Panc1 (cell line): ENCODE measurements at regions of chr1 and their contacts with region 1.

Region 1: DNA sequence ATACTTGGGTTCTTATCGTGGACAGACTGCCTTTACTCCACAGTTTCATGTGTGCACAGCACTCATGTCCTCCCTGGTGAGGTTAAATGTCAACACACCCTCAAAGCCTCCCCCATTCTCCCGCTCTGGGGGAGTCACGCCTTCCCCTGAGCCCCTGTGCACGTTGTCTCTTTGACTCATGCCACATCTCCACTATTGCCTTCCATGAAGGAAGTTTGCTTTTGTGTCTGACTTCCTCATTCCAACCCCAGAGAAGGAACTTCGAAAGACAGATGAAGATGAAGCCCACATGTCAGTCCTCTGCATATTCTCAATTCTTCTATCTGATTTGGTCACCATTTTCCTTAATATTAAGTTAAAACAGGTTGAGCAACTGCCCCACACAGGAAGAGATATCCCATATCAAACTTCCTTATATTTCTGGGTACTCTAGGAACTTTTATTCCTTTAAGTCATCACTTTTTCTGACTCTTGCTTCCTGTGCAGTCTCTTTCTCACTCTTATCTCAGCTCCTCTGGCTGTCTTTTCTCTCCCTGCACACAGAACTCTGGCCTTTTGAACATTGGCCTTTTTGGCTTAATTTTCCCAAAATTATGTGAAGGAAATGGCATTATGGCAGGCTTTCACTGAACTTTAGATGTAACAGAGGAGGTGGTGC is 41.5 kb downstream of the C4BPA start:
- DNase-seq: no peak
- ATAC-seq: no peak
- H3K4me3 ChIP-seq: no peak overlapping the region
- H3K27ac ChIP-seq: no peak overlapping the region
- H3K4me1 ChIP-seq: no peaks in the 10 kb centered on the region
- H3K27me3 ChIP-seq: no peaks in the 10 kb centered on the region
- CTCF ChIP-seq: no peak

Region 2: GRCh38 chr1:206967096-206967849 is 178.3 kb before region 1 on chr1:
- CTCF ChIA-PET with region 1: no interaction called
- POLR2A ChIA-PET with region 1: no interaction called
- in situ Hi-C with region 1: no loop called
- intact Hi-C with region 1: no loop called
- DNase-seq: no peak
- ATAC-seq: no peak
- H3K4me3 ChIP-seq: no peak overlapping the region
- H3K27ac ChIP-seq: no peak overlapping the region
- H3K4me1 ChIP-seq: no peaks in the 10 kb centered on the region
- H3K27me3 ChIP-seq: peaks cover 13% of the 10 kb centered on the region
- CTCF ChIP-seq: no peak

Region 3: DNA sequence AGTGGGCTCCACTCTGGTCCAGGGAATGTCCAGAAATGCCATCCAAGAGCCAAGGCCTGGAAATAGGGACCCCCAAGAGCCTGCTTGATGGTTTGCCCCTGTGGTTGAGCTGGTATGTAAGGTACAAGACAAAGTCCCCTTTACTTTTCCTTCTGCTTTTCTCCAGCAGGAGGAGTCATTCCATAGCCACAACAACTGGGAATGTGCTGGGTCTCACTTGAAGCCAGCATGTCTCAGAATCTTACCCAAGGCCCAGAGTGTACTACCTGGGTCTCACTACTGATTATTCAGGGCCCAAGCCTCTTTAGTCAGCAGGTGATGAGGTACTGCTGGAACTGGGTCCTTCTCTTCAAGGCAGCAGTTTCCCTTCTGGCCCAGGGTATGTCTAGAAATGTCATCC is 113.9 kb after region 1 on chr1:
- CTCF ChIA-PET with region 1: no interaction called
- POLR2A ChIA-PET with region 1: interaction called, 10 read pairs
- in situ Hi-C with region 1: no loop called
- intact Hi-C with region 1: no loop called
- DNase-seq: no peak
- ATAC-seq: no peak
- H3K4me3 ChIP-seq: no peak overlapping the region
- H3K27ac ChIP-seq: no peak overlapping the region
- H3K4me1 ChIP-seq: no peaks in the 10 kb centered on the region
- H3K27me3 ChIP-seq: no peaks in the 10 kb centered on the region
- CTCF ChIP-seq: peak; percentile 17

Region 4: GRCh38 chr1:208149776-208150514 is 1004.4 kb after region 1 on chr1:
- CTCF ChIA-PET with region 1: no interaction called
- POLR2A ChIA-PET with region 1: no interaction called
- in situ Hi-C with region 1: no loop called
- intact Hi-C with region 1: no loop called
- DNase-seq: no peak
- ATAC-seq: no peak
- H3K4me3 ChIP-seq: no peak overlapping the region
- H3K27ac ChIP-seq: no peak overlapping the region
- H3K4me1 ChIP-seq: no peaks in the 10 kb centered on the region
- H3K27me3 ChIP-seq: no peaks in the 10 kb centered on the region
- CTCF ChIP-seq: no peak